PC-9 (cell line): ENCODE measurements at regions of chr10 and their contacts with region 1.

Region 1: GRCh38 chr10:29804025-29804852 is 169.5 kb upstream of the SVIL start:
- DNase-seq: peak; percentile 86 to 96
- H3K4me3 ChIP-seq: peak overlapping the region; percentile 38; the same call in 1 of the 2 replicates
- H3K27ac ChIP-seq: peak overlapping the region; percentile 100
- H3K4me1 ChIP-seq: peaks cover 69% of the 10 kb centered on the region
- H3K27me3 ChIP-seq: no peaks in the 10 kb centered on the region
- CTCF ChIP-seq: no peak

Region 2: DNA sequence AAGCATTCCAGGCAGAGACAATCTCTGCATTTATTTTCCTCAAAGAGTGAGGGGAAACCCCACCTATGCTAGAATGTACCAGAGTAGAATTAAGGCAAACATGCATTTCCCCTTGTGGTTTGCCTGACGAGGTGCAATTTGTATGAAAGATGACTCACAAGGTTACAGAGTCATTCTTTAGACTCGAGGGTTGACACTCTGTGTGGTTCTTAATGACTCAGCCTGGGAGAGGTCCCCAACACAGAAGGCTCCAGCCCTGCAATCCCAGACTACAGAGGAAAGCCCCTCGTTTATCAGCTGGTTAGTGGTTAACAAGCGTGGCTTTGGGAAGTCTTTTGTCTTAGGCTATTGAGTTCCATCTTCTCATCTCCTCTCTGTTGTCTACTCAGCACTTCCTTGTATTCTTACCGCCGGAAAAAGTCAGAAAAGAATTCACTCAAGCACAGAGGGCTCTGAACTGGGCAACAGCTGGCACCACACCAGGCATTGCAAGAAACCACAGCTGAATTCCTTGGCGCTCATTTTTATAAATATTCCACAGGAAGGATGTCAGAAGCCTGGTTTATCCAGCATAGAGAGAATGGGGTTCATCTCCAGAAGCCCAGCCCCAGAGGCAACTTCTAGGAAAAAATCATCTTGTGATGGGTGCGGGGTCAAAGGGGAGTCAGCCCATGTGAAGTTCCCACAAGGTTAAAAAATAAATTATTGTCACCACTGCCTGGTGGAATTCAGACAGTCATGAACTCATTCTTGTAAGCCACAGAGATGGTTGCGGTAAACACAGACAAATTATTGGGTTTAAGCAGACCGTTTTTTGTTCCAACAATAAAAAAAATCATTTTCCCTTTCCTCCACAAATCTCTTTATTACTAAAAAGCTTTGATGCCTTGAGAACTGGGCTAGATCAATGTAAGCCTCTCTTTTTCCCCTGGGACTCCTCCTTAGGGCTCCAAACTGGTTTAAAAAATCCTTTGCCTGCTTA is 145.0 kb before region 1 on chr10:
- CTCF ChIA-PET with region 1: no interaction called
- POLR2A ChIA-PET with region 1: no interaction called
- intact Hi-C with region 1: loop called (anchors 1 kb)
- DNase-seq: peak; percentile 87 to 97
- H3K4me3 ChIP-seq: no peak overlapping the region
- H3K27ac ChIP-seq: peak overlapping the region; percentile 76
- H3K4me1 ChIP-seq: peaks cover 51% of the 10 kb centered on the region
- H3K27me3 ChIP-seq: no peaks in the 10 kb centered on the region
- CTCF ChIP-seq: peak; percentile 45; the same call in 1 of the 2 replicates

Region 3: DNA sequence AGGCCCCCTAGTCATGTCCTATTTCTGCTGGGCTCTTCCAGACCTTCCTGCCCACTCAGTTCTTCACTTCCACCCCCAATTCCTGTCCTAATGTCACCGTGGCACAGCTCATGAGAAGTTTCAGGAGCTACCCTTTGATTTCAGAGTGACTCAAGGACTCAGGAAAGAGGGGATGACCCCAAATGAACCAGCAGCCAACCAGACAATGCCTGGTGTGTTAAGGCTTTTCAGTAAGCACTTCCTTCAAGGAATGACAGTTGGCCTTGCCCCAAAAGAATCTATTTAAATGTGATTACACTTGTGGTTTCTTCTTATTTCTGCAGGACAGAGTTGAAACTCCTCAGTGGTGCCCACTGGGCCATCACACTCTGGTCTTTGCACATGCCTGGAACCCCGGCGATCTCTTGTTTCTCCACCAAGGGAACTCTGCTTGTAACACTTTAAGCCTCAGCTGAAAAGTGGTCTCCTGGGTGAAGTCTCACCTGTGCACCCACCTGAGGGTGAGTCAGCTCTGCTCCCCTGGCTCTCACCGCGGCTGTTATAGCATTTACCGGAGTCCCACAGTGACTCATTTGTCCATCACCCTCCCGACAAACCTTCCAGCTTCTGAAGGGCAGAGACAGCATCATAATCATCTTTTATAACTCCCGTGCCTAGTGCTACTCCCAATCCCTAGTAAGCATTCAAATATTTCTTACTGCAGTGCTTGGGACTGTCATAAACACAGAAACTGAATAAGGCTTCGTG is 46.5 kb before region 1 on chr10:
- CTCF ChIA-PET with region 1: no interaction called
- POLR2A ChIA-PET with region 1: no interaction called
- intact Hi-C with region 1: loop called (anchors 1 kb)
- DNase-seq: peak; percentile 75 to 90
- H3K4me3 ChIP-seq: no peak overlapping the region; the same call in 1 of the 2 replicates
- H3K27ac ChIP-seq: peak overlapping the region; percentile 86
- H3K4me1 ChIP-seq: peaks cover 24% of the 10 kb centered on the region
- H3K27me3 ChIP-seq: no peaks in the 10 kb centered on the region
- CTCF ChIP-seq: no peak

Region 4: DNA sequence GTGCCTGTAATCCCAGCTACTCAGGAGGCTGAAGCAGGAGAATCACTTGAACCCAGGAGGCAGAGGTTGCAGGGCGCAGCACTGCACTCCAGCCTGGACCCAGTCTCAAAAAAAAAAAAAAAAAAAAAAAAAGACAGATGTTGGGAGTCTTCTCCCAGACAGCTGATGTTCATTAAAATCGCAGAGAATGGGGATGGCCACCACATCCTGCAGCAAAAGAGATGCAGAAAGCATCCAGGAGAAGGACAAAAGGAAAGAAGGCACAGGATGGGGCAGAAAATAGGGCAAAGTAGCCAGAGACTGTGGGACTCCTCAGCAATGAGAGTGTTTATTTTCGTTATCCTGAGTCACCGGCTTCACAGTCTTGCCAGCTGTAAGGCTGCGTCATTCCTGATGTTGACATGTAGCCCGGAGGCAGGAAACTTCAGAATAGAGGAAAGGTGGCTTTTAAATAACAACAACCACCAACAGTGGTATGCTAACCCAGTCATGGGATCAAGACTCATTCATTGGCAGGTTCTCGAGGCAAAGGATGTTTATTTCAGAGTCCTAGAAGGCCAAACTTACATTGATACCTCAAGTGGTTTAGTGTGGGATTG is 20.0 kb before region 1 on chr10:
- CTCF ChIA-PET with region 1: no interaction called
- POLR2A ChIA-PET with region 1: interaction called, 10 read pairs
- intact Hi-C with region 1: loop called (anchors 1 kb)
- DNase-seq: peak; percentile 76 to 95
- H3K4me3 ChIP-seq: no peak overlapping the region
- H3K27ac ChIP-seq: peak overlapping the region; percentile 86
- H3K4me1 ChIP-seq: peaks cover 30% of the 10 kb centered on the region
- H3K27me3 ChIP-seq: no peaks in the 10 kb centered on the region
- CTCF ChIP-seq: no peak

Region 5: GRCh38 chr10:29949411-29950011 is 145.3 kb after region 1 on chr10:
- CTCF ChIA-PET with region 1: no interaction called
- POLR2A ChIA-PET with region 1: interaction called, 4 read pairs
- intact Hi-C with region 1: loop called (anchors 1 kb)
- DNase-seq: peak; percentile 44 to 96
- H3K4me3 ChIP-seq: no peak overlapping the region
- H3K27ac ChIP-seq: peak overlapping the region; percentile 91
- H3K4me1 ChIP-seq: peaks cover 51% of the 10 kb centered on the region
- H3K27me3 ChIP-seq: no peaks in the 10 kb centered on the region
- CTCF ChIP-seq: no peak